Activated B cell treated with CpG ODN at 0.5 μM for 24 hours (primary cell): ENCODE measurements at regions of chr1 and their contacts with region 1.

Region 1: GRCh38 chr1:161192476-161193465 is 6.1 kb downstream of the ADAMTS4 start:
- DNase-seq: no peak
- ATAC-seq: peak; percentile 93
- H3K4me3 Mint-ChIP-seq: no peak overlapping the region
- H3K27ac Mint-ChIP-seq: peak overlapping the region; percentile 68
- H3K4me1 Mint-ChIP-seq: peaks cover 52% of the 10 kb centered on the region
- H3K27me3 Mint-ChIP-seq: no peaks in the 10 kb centered on the region
- CTCF ChIP-seq: peak; percentile 56

Region 2: DNA sequence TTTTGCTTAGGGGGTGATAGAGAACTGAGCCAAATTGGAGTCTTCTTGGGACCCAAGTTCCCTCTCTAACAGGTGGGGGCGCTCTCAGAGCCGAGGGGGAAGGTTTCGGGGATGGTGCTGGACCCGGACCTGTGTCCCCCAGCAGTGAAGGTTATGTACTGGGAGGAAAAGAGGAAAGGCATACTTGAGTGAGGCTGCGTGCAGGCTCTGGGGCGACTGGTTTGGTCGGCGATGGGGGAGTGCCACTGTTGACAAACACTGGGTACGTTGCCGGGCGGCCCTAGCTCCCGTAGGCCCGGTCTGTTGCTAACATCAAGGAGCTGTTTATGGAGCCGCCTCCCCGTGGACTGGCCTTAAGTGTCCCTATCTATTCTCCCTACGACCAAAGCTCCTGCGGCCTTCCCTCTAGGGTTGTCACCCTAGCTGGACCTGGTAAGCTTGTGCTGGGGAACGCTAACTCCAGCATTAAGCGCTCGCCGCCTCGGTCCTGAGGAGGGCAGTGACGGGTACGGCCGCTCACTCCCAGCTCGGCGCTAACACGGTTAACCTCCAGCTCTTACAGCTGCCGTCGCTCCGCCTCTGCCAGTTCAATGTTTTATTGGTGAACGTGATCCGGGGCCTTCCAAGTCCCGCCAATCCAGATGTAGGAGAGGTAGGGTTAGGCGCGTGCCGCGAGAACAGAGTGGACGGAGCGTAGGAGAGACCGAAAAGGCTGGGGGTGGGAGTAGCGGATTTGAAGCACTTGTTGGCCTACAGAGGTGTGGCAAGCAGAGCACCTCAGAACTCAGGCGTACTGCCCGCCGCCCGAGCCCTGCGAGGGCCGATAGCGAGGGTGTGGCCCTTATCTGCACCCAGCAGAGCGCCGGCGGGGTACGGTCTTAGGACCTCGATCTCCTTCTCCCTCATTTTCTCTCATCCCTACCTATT is 26.8 kb before region 1 on chr1 and contains the start of gene PPOX:
- CTCF ChIA-PET with region 1: interaction called, 40 read pairs
- POLR2A ChIA-PET with region 1: interaction called, 6 read pairs
- intact Hi-C with region 1: no loop called
- DNase-seq: peak; percentile 82
- ATAC-seq: peak; percentile 94
- H3K4me3 Mint-ChIP-seq: peak within 1 kb of the TSS; percentile 88
- H3K27ac Mint-ChIP-seq: peak within 1 kb of the TSS; percentile 98
- H3K4me1 Mint-ChIP-seq: peaks cover 48% of the 10 kb centered on the region
- H3K27me3 Mint-ChIP-seq: no peaks in the 10 kb centered on the region
- CTCF ChIP-seq: no peak
- total RNA-seq, gene PPOX: 31.5 and 40.7 TPM in 2 replicates

Region 3: GRCh38 chr1:161209790-161210409 is 17.1 kb after region 1 on chr1:
- CTCF ChIA-PET with region 1: interaction called, 3 read pairs
- POLR2A ChIA-PET with region 1: interaction called, 3 read pairs
- intact Hi-C with region 1: loop called (anchors 1 kb)
- DNase-seq: peak; percentile 52
- ATAC-seq: peak; percentile 97
- H3K4me3 Mint-ChIP-seq: no peak overlapping the region
- H3K27ac Mint-ChIP-seq: no peak overlapping the region
- H3K4me1 Mint-ChIP-seq: peaks cover 9% of the 10 kb centered on the region
- H3K27me3 Mint-ChIP-seq: no peaks in the 10 kb centered on the region
- CTCF ChIP-seq: no peak

Region 4: DNA sequence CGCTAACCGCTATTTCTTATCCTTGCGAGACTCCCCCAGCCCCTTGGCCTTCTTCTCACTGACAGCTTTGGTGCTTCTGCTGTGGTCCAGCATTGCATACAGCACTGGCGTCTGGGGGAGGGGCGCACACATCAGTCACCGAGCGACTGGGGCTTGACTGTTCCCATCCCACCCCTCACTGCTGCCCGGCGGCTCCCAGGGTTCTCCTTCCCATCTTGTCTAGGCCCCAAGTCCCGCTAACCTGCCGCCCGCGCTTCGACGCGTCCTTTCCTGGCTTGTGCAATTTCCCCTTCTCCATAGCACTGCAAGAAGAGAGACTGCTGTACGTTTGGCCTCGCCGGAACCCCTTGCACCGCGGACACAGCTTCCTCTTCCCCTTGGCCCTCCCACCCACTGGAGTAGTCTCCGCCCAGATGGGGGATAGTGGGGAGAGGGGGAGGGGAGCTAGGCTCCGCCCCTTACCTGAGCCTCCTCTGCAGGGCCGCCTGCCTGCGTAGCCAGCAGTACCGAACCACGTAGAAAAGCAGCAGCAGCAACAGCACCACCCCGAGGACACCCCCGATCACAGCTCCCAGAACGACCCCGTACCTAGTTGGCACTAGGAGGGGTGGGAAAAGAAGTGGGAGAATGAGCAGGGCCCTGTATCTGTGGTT is 113.2 kb after region 1 on chr1:
- CTCF ChIA-PET with region 1: no interaction called
- POLR2A ChIA-PET with region 1: no interaction called
- intact Hi-C with region 1: loop called (anchors 2 kb)
- DNase-seq: peak; percentile 78
- ATAC-seq: peak; percentile 94
- H3K4me3 Mint-ChIP-seq: peak overlapping the region; percentile 99
- H3K27ac Mint-ChIP-seq: peak overlapping the region; percentile 93
- H3K4me1 Mint-ChIP-seq: peaks cover 44% of the 10 kb centered on the region
- H3K27me3 Mint-ChIP-seq: no peaks in the 10 kb centered on the region
- CTCF ChIP-seq: no peak